ENCODE measurements at regions of chr17 and their contacts with region 1.

Region 1: GRCh38 chr17:57243171-57243948 is 13.0 kb upstream of the MSI2 start:
- DNase-seq: peak; percentile 73
- H3K4me3 Mint-ChIP-seq: no peak overlapping the region
- H3K27ac Mint-ChIP-seq: no peak overlapping the region
- H3K4me1 Mint-ChIP-seq: peaks cover 4% of the 10 kb centered on the region
- H3K27me3 Mint-ChIP-seq: no peaks in the 10 kb centered on the region
- CTCF ChIP-seq: peak; percentile 98

Region 2: DNA sequence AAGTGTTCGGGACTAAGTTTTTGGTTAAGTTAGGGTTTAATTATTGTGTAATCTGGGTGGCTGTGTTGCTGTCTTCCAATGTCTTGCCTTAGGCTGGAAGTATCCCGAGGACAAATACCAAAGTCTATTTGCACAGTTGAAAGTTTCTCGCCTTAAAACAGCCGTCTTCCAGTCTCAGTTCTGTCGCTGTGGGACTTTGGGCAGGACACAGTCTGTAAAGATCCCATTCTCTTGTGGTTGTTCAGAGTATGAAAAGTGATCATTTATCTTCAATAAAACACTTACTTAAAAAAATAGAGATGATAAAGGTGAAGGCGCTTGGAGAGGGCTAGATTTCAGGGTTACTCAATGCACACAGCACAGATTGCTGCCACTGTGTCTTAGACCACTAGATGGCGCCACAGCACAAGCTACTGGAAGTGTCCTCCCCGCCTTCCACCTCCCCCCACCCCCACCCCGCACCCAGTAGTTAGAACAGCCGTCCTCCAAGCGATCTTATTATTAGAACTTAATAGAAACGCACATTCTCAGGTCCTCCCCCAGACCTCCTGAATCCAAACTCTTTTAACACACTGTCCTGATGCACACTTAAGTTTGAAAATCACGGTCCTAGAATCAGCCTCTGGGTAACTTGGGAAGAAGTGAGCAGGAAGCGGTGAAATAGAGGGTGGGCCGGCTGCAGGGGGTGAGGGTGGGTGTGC is 112.4 kb before region 1 on chr17:
- CTCF ChIA-PET with region 1: interaction called, 15 read pairs
- POLR2A ChIA-PET with region 1: no interaction called
- intact Hi-C with region 1: loop called (anchors 1 kb)
- DNase-seq: peak; percentile 89
- H3K4me3 Mint-ChIP-seq: no peak overlapping the region
- H3K27ac Mint-ChIP-seq: no peak overlapping the region
- H3K4me1 Mint-ChIP-seq: peaks cover 5% of the 10 kb centered on the region
- H3K27me3 Mint-ChIP-seq: no peaks in the 10 kb centered on the region
- CTCF ChIP-seq: peak; percentile 85

Region 3: GRCh38 chr17:57215311-57215710 is 28.0 kb before region 1 on chr17:
- CTCF ChIA-PET with region 1: interaction called, 30 read pairs
- POLR2A ChIA-PET with region 1: interaction called, 3 read pairs
- intact Hi-C with region 1: no loop called
- DNase-seq: peak; percentile 92
- H3K4me3 Mint-ChIP-seq: peak overlapping the region; percentile 46
- H3K27ac Mint-ChIP-seq: peak overlapping the region; percentile 96
- H3K4me1 Mint-ChIP-seq: peaks cover 43% of the 10 kb centered on the region
- H3K27me3 Mint-ChIP-seq: no peaks in the 10 kb centered on the region
- CTCF ChIP-seq: no peak

Region 4: GRCh38 chr17:57271821-57272220 is 28.5 kb after region 1 on chr17:
- CTCF ChIA-PET with region 1: interaction called, 12 read pairs
- POLR2A ChIA-PET with region 1: no interaction called
- intact Hi-C with region 1: no loop called
- DNase-seq: no peak
- H3K4me3 Mint-ChIP-seq: no peak overlapping the region
- H3K27ac Mint-ChIP-seq: no peak overlapping the region
- H3K4me1 Mint-ChIP-seq: no peaks in the 10 kb centered on the region
- H3K27me3 Mint-ChIP-seq: no peaks in the 10 kb centered on the region
- CTCF ChIP-seq: no peak

Region 5: GRCh38 chr17:57518587-57519581 is 275.5 kb after region 1 on chr17:
- CTCF ChIA-PET with region 1: interaction called, 7 read pairs
- POLR2A ChIA-PET with region 1: no interaction called
- intact Hi-C with region 1: loop called (anchors 5 kb)
- DNase-seq: peak; percentile 8
- H3K4me3 Mint-ChIP-seq: no peak overlapping the region
- H3K27ac Mint-ChIP-seq: no peak overlapping the region
- H3K4me1 Mint-ChIP-seq: peaks cover 27% of the 10 kb centered on the region
- H3K27me3 Mint-ChIP-seq: no peaks in the 10 kb centered on the region
- CTCF ChIP-seq: no peak

Region 6: DNA sequence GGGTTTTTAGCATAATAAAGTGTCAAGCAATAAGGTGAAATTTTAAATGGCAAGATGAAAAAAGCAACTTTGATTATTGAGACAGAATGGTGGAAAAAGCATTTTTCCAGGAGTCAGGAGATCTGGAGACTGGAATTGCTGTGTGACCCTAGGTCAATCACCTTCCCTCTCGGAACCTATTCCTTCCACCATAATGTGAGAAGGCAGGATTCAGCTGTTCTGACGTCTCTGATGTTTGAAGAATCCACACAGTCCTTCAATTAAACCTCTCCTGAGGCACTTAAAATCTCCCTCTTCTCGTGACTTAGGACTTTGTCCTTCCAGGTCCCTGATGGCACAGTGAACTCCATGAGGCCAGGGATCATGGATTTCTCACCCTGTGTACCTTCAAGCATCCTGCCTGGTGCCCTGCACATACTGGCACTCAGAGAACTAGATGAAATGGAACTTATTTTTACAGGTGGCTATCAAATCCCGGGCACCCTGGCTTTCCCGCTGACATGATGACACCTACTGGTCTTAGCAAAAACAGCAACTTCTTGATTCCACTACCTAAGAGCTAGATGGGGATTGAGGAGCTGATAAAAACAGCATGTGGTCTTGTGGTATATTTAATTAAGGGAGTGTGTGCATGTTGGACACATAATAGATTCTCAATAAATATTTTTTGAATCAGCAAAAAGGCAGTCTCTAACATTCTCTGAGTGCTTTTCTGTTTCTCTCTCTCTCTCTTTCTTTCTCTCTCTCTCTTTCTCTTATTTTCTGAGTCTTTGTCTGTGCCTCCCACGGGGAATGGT is 504.1 kb after region 1 on chr17:
- CTCF ChIA-PET with region 1: interaction called, 31 read pairs
- POLR2A ChIA-PET with region 1: interaction called, 3 read pairs
- intact Hi-C with region 1: loop called (anchors 1 kb)
- DNase-seq: peak; percentile 68
- H3K4me3 Mint-ChIP-seq: no peak overlapping the region
- H3K27ac Mint-ChIP-seq: no peak overlapping the region
- H3K4me1 Mint-ChIP-seq: no peaks in the 10 kb centered on the region
- H3K27me3 Mint-ChIP-seq: peaks cover 55% of the 10 kb centered on the region
- CTCF ChIP-seq: peak; percentile 77

Measured in MCF 10A (cell line).